Aorta (tissue), 5 donors: ENCODE measurements at regions of chr6 and their contacts with region 1.

Region 1: GRCh38 chr6:90216072-90216977 is 80.3 kb downstream of the BACH2 start:
- DNase-seq: peak in 1 of 2 donors; percentile 49
- ATAC-seq: no peak
- H3K4me3 ChIP-seq: no peak overlapping the region
- H3K27ac ChIP-seq: peak overlapping the region in 1 of 2 donors; percentile 65
- H3K4me1 ChIP-seq: no peaks in the 10 kb centered on the region
- H3K27me3 ChIP-seq: no peaks in the 10 kb centered on the region

Region 2: DNA sequence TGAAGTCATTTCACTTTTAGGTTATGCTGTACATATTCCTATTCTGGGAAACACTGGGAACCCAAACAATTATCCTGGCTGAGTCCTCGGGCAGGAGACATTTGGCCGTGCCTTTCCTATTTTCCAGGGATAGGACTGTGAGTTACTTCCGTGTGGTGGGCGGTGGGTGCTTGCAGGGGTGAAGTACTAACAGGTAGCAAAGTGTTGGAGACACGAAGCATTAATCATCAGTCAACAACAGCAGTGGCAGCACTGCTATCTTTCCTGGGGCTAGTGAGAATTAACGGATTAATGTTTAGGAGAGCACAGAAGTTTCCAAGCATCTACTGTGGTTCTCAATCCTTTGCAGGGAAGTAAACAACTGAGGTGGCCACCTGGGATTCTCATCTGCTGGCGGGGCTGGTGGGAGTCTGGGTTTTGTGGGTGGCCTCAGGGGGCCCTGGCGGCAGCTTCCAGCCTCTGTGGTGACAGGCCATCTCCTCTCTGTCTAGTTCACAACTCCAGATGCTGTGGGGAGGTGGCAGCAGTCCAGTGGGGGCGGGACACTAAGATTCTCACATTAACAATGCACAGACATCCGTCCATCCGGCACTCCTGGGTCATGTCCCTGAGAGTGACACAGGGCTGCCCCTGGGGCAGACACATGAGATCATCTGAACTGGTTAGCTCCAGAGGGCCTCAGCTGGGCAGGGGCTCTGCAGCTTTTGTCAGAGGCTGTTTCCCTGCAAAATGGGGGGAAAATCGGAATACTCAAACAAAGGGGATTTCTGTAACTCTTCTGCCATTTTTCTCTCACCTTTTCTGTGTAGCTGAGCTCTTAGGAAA is 231.2 kb before region 1 on chr6:
- intact Hi-C with region 1: loop called (anchors 10 kb)
- DNase-seq: peak; percentile 67 to 76
- ATAC-seq: no peak
- H3K4me3 ChIP-seq: no peak overlapping the region
- H3K27ac ChIP-seq: no peak overlapping the region
- H3K4me1 ChIP-seq: peaks cover 4 to 6% of the 10 kb centered on the region in 2 donors
- H3K27me3 ChIP-seq: no peaks in the 10 kb centered on the region

Region 3: DNA sequence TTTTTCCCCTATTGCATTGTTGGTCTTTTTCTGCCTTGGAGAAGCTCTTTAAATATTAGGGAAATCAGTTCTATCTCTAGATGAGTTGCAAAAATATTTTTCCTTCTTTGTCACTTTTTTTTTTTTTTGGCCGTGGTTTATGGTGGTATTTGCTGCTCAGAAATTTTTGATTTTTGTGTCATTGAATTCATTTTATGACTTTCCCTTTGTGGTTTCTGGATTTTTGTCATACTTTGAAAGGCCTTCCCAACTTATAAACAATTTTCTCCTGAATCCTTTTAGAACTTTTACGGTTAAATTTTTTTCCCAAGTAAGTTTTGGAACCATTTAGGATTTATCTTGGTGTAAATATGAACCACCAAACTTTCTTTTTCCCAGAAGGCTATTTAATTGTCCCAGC is 176.4 kb before region 1 on chr6:
- intact Hi-C with region 1: no loop called
- DNase-seq: no peak
- ATAC-seq: no peak
- H3K4me3 ChIP-seq: no peak overlapping the region
- H3K27ac ChIP-seq: no peak overlapping the region
- H3K4me1 ChIP-seq: peaks cover 0 to 3% of the 10 kb centered on the region in 2 donors
- H3K27me3 ChIP-seq: no peaks in the 10 kb centered on the region

Region 4: GRCh38 chr6:90179190-90180169 is 36.8 kb before region 1 on chr6:
- intact Hi-C with region 1: loop called (anchors 5 kb)
- DNase-seq: no peak
- ATAC-seq: no peak
- H3K4me3 ChIP-seq: no peak overlapping the region
- H3K27ac ChIP-seq: no peak overlapping the region
- H3K4me1 ChIP-seq: peaks cover 9% of the 10 kb centered on the region in 2 donors
- H3K27me3 ChIP-seq: no peaks in the 10 kb centered on the region

Region 5: GRCh38 chr6:90296346-90297114 is 80.2 kb after region 1 on chr6 and contains the start of gene BACH2:
- intact Hi-C with region 1: loop called in 1 of 2 experiments (anchors 5 kb)
- DNase-seq: peak; percentile 92 to 96
- ATAC-seq: peak; percentile 76
- H3K4me3 ChIP-seq: peak within 1 kb of the TSS; percentile 22 to 86
- H3K27ac ChIP-seq: peak within 1 kb of the TSS; percentile 68 to 97
- H3K4me1 ChIP-seq: no peaks in the 10 kb centered on the region
- H3K27me3 ChIP-seq: no peaks in the 10 kb centered on the region
- total RNA-seq, gene BACH2: 11.6 to 22.2 TPM

Region 6: DNA sequence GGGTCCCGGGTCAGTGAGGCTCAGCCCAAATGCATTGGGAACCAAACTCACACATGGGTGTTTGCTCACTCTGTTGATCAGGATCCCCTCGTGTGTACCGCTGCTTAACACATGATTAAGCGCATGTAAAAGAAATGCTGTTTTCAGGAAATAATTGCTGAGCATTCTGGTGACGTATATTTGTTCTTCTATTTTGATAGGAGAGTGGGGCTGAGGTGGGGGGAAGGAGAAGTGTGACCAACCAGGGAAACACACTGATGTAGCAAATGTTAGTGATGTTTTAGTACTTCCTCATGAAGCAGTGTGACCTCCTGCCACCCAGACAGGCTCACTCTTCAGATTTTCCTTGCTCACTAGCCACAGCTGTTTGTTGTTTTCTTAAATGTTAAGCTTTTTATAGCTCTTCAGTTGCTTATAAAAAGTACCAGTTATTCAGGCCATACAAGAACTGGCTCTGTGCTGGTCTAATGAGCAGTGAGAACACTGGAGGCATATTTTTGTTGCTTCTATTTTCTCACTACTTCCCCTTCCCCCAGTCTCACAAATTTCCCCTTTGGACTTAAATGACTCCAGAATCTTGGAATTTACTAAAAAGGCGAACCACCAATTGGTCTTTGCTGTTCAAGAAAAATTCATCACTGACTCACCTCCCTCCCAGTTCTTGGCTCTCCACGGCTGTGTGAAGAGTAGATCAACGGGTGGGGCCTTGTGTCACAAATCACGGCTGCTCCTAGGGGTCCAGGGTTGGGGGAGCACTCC is 159.5 kb after region 1 on chr6:
- intact Hi-C with region 1: loop called (anchors 5 to 10 kb)
- DNase-seq: no peak
- ATAC-seq: peak; percentile 69
- H3K4me3 ChIP-seq: no peak overlapping the region
- H3K27ac ChIP-seq: peak overlapping the region; percentile 64 to 70
- H3K4me1 ChIP-seq: no peaks in the 10 kb centered on the region
- H3K27me3 ChIP-seq: no peaks in the 10 kb centered on the region

Region 7: DNA sequence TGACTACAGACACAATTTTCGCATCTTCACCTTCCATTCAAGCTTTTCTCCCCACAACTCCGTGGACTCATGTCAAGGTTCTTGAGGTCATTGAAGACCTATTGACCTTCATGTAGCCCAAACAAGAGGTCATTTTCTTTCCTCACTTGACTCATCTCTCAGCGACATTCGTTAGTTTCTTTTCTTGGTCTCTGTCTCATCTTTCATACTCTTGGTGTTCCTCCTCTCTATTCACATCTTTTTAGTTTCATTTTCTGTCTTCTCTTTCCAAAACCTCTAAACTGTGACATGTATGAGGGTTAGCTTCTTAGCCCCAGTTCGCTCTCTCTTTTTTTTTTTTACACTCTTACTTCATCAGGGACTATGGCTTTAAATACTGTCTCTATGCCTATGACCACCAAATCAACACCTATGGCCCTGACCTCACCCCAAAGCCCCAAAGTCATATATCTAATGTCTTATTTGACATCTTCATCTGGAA is 208.9 kb after region 1 on chr6:
- intact Hi-C with region 1: no loop called
- DNase-seq: no peak
- ATAC-seq: no peak
- H3K4me3 ChIP-seq: no peak overlapping the region
- H3K27ac ChIP-seq: no peak overlapping the region
- H3K4me1 ChIP-seq: no peaks in the 10 kb centered on the region
- H3K27me3 ChIP-seq: peaks cover 0 to 1% of the 10 kb centered on the region in 2 donors